Dorsolateral prefrontal cortex (tissue), 120 donors: ENCODE measurements at regions of chr6 and their contacts with region 1.

Region 1: DNA sequence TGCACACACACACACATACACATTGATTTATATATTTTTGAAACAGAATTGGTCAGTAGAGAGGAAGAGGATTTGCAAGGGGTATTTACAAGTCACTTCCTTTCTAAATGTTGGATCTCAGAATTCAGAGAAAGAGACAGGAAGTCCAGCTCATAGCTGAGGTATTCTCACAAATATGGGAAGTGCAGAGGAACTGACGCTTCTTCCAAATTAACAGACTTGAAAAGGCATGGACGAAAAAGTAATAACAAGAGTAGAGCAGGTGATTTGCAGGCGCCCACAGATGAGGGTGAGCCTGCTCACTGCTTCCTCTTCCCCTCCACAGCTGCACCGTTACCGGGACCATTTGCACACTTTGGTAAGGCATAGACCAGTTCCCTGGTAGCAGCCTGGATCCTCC is 246.4 kb downstream of the PHACTR1 start:
- DNase-seq: no peak
- H3K4me3 ChIP-seq: peak overlapping the region in 1 of 59 donors; percentile 3
- H3K27ac ChIP-seq: peak overlapping the region in 8 of 59 donors; percentile 7 to 63 (median 14)
- H3K27me3 ChIP-seq: no peaks in the 10 kb centered on the region
- CTCF ChIP-seq: no peak

Region 2: GRCh38 chr6:12875051-12875450 is 87.9 kb before region 1 on chr6:
- intact Hi-C with region 1: no loop called
- DNase-seq: no peak
- H3K4me3 ChIP-seq: no peak overlapping the region
- H3K27ac ChIP-seq: no peak overlapping the region
- H3K27me3 ChIP-seq: peaks cover 0 to 6% (median 0%) of the 10 kb centered on the region in 45 donors
- CTCF ChIP-seq: no peak

Region 3: DNA sequence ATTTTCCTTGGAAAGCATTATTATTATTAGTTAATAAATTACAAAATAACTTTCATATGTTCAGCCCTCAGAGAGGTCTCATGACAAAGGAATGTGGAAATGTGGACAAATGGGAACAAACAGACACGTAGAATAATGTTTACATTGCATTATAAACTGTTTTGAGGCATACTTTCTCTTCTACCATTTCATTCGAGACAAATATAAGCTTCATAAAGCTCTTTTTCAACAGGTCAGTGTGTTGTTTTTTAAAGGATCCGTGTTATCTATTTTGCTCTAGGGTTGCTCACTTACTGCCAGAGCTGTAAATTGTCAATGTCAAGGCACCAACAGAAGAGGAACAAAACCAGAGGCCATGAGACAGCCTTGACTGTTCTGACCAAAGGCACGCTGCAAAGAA is 10.4 kb after region 1 on chr6:
- intact Hi-C with region 1: loop called in 1 of 2 experiments (anchors 1 kb)
- DNase-seq: no peak
- H3K4me3 ChIP-seq: no peak overlapping the region
- H3K27ac ChIP-seq: no peak overlapping the region
- H3K27me3 ChIP-seq: no peaks in the 10 kb centered on the region
- CTCF ChIP-seq: no peak

Region 4: DNA sequence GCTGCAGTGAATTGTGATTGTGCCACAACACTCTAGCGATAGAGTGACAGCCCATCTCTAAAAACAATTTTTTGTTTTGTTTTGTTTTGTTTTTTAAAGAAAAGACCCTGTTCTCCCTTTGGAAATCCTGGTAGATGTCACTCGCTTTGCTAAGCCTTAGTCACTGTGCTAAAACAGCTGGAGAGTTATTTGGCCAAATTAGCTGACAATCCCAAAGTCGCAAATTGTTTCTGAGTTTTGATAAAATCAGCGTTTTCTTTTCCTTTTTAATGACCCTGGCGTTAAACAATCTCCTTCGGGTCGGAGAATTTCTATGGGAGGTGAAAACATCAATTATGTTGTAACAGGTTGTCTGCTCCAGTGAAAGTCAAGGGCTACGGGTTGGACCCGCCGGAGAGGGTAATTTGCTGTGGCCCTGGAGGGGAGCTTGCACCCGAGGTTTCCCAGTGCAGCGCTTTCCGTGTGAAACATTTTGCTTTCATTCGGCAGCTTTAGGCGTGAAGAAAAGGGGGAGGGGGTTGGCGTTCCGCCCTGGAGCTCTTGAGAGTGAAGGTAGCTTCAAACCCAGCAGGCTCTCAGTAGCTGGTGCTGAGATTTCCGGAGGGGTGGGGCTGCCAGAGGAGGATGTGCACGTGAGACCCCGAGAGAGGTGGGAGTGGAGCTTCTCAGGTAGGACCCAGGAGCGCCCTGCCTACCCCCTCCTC is 50.1 kb after region 1 on chr6:
- intact Hi-C with region 1: loop called in 1 of 2 experiments (anchors 5 kb)
- DNase-seq: peak; percentile 27 to 67 (median 56)
- H3K4me3 ChIP-seq: peak overlapping the region; percentile 51 to 84 (median 71)
- H3K27ac ChIP-seq: peak overlapping the region in 42 of 59 donors; percentile 12 to 87 (median 66)
- H3K27me3 ChIP-seq: no peaks in the 10 kb centered on the region
- CTCF ChIP-seq: no peak

Region 5: GRCh38 chr6:13395272-13396237 is 432.6 kb after region 1 on chr6:
- intact Hi-C with region 1: no loop called
- DNase-seq: peak in 7 of 10 donors; percentile 32 to 79 (median 65)
- H3K4me3 ChIP-seq: peak overlapping the region in 2 of 59 donors; percentile 3 to 18
- H3K27ac ChIP-seq: peak overlapping the region in 57 of 59 donors; percentile 6 to 87 (median 67)
- H3K27me3 ChIP-seq: no peaks in the 10 kb centered on the region
- CTCF ChIP-seq: no peak